ENCODE measurements at regions of chr1 and their contacts with region 1.

Region 1: DNA sequence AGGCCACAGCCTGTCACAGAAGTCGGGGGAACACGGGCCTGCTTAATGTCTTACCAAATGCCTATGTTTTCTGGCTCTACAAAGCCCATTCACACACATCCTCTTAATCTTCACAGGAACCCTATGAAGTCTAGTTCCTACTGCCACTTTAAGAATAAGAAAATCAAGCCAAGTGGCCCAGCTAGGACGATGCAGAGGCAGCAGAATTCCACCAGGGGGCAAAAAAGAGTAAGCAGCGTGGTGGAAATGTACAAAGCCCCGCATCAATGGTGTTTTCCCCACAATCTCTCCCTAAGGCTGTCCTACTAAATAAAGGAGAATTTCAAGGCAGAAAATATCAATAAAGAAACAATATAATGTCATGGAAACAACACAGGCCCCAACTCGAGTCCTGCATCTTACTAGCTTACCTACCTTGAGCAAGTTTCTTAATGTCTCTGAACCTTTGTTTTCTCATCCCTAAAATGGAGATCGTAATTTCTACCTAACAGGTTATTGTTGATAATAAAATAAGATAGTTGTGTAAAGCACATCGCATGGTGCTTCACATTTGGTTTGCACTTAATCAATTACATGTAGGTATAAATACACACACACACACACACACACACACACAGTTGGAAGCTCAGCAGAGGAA is 21.4 kb downstream of the SEC16B start:
- ATAC-seq: peak; percentile 55 to 86 (median 75)
- H3K4me3 ChIP-seq: no peak overlapping the region
- H3K27ac ChIP-seq: no peak overlapping the region
- H3K4me1 ChIP-seq: peaks cover 17 to 28% of the 10 kb centered on the region in 2 donors

Region 2: DNA sequence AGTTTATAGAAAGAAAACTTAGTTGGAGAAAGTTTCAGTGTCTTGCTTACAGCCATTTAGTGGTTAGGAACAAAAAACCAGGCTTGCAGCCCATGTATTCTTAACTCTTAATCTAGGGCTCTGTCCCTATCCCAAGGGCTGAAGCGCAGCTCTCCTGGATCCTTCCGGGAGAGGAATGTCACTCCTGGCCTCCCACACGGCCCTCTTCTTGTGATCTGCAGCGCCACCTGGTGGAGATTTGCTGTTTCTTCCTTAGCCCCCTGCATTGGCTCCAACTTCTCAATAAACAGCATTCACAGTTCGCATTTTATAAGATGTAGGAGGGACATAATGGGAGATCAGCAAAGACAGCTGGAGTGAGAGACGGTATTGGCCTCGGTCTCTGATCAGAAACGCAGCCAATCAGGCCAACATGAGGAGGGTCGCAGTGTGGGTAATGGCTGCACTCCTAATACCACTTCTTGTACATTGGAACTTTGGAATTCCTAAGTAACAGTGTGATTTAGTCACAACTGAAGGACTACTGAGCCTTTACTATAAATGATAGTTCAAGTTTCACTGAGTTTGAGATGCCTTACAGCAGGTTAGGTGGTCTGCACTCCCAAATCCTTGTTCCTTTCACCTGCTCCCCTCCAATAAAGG is 1067.4 kb before region 1 on chr1:
- in situ Hi-C with region 1: loop called in 5 of 9 experiments (anchors 10 to 25 kb)
- ATAC-seq: peak; percentile 93 to 100 (median 96)
- H3K4me3 ChIP-seq: no peak overlapping the region
- H3K27ac ChIP-seq: no peak overlapping the region
- H3K4me1 ChIP-seq: no peaks in the 10 kb centered on the region

Region 3: DNA sequence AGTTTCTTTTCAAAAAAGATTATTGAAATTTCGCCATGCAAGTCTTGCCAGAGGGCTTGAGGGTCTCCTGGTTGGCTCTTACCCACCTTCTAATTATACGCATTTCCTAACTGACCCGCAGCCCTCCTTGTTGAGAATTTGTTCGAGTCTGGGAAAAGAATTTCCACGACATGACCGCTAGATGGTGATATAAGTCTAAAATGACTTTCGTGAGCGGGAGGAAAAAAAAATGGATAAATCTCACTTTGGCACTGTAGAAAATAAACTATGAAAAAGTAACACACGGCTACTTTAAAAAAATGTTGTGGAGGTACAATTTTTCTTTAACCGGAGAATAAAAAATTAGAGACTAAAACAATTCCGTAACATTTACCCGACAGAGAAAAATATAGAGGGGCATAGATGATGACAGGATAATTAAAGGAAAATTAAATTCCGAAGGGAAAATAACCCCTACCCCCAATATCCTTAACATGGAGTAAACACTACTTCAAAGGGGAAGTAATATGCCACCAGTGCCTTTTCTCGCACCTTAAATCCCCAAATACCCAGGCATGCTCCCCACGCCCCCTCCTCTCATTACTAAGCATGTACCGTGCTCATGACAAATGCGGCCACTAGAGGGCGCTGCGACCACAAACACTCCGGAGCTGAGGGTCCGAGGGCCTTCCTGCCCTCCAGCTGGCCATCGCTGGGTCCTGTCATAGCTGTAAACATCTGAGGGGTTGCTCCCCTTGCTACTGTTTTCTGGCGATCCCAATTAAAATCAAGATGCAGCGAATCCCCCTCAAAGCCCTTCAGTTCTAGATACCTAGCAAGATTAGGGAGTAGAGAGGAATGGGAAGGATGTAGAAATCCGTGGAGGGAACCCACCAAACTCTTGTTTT is 1050.9 kb before region 1 on chr1:
- in situ Hi-C with region 1: loop called in 6 of 9 experiments (anchors 10 to 25 kb)
- ATAC-seq: peak; percentile 72 to 100 (median 100)
- H3K4me3 ChIP-seq: peak overlapping the region in 3 of 5 donors; percentile 5 to 14 (median 14)
- H3K27ac ChIP-seq: no peak overlapping the region
- H3K4me1 ChIP-seq: peaks cover 3 to 6% of the 10 kb centered on the region in 2 donors

Region 4: DNA sequence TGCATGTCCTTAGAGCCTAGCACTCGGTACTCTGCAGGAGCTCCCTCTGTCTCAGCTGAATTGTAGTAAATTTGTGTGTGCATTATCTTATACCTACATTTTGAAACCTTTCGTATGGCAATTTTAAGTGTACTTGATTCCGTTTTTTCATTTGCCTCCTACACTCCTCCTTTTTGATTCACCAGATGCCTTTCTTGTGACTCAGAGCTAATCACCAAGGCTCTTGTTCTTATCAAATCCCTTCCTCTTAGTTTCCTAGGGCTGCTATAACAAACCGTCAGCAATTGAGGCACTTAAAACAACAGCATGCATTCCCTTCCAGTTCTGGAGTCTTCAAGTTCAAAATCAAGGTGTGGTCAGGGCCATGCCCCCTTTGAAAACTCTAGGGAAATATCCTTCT is 1045.0 kb before region 1 on chr1:
- in situ Hi-C with region 1: loop called in 6 of 9 experiments (anchors 10 to 25 kb)
- ATAC-seq: no peak
- H3K4me3 ChIP-seq: no peak overlapping the region
- H3K27ac ChIP-seq: no peak overlapping the region
- H3K4me1 ChIP-seq: peaks cover 0 to 8% of the 10 kb centered on the region in 2 donors

Region 5: GRCh38 chr1:177611402-177611801 is 337.1 kb before region 1 on chr1:
- in situ Hi-C with region 1: no loop called
- ATAC-seq: no peak
- H3K4me3 ChIP-seq: no peak overlapping the region
- H3K27ac ChIP-seq: no peak overlapping the region
- H3K4me1 ChIP-seq: no peaks in the 10 kb centered on the region

Region 6: GRCh38 chr1:178093205-178093957 is 144.9 kb after region 1 on chr1:
- in situ Hi-C with region 1: no loop called
- ATAC-seq: peak; percentile 62 to 88 (median 84)
- H3K4me3 ChIP-seq: peak overlapping the region; percentile 83 to 94 (median 89)
- H3K27ac ChIP-seq: peak overlapping the region; percentile 89 to 95
- H3K4me1 ChIP-seq: peaks cover 18 to 31% of the 10 kb centered on the region in 2 donors

Region 7: GRCh38 chr1:178220094-178220493 is 271.6 kb after region 1 on chr1:
- in situ Hi-C with region 1: no loop called
- ATAC-seq: no peak
- H3K4me3 ChIP-seq: no peak overlapping the region
- H3K27ac ChIP-seq: no peak overlapping the region
- H3K4me1 ChIP-seq: no peaks in the 10 kb centered on the region